ENCODE measurements at regions of chr12 and their contacts with region 1.

Region 1: GRCh38 chr12:12003609-12004008 is 67.1 kb upstream of the BCL2L14 start:
- DNase-seq: no peak
- H3K4me3 ChIP-seq: no peak overlapping the region
- H3K27me3 ChIP-seq: peaks cover 14% of the 10 kb centered on the region
- CTCF ChIP-seq: no peak

Region 2: GRCh38 chr12:11780521-11781101 is 223.0 kb before region 1 on chr12:
- CTCF ChIA-PET with region 1: no interaction called
- POLR2A ChIA-PET with region 1: no interaction called
- DNase-seq: no peak
- H3K4me3 ChIP-seq: no peak overlapping the region
- H3K27me3 ChIP-seq: no peaks in the 10 kb centered on the region
- CTCF ChIP-seq: no peak

Region 3: DNA sequence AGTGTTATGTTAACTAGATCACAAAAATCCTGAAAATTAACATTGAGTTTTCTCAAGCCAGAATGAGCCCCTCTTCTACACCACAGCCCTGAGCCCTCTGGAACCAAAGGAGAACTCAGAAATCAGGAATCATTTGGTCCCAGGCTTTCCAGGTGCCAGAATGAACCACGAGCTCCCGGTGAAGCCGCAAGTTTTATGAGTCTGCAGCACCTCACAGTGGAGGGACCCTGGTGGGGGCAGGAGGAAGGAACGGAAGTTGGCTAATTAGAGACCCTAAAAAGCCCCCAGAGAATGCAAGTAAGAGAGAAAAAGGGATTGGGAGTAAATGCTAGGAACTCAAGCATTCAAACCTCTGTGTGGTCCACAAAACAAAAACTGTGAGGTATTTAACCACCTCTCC is 14.2 kb after region 1 on chr12:
- CTCF ChIA-PET with region 1: interaction called, 10 read pairs
- POLR2A ChIA-PET with region 1: no interaction called
- DNase-seq: no peak
- H3K4me3 ChIP-seq: no peak overlapping the region
- H3K27me3 ChIP-seq: no peaks in the 10 kb centered on the region; the same call in 1 of the 2 replicates
- CTCF ChIP-seq: no peak